CD14-positive monocyte (primary cell): ENCODE measurements at regions of chr16 and their contacts with region 1.

Region 1: DNA sequence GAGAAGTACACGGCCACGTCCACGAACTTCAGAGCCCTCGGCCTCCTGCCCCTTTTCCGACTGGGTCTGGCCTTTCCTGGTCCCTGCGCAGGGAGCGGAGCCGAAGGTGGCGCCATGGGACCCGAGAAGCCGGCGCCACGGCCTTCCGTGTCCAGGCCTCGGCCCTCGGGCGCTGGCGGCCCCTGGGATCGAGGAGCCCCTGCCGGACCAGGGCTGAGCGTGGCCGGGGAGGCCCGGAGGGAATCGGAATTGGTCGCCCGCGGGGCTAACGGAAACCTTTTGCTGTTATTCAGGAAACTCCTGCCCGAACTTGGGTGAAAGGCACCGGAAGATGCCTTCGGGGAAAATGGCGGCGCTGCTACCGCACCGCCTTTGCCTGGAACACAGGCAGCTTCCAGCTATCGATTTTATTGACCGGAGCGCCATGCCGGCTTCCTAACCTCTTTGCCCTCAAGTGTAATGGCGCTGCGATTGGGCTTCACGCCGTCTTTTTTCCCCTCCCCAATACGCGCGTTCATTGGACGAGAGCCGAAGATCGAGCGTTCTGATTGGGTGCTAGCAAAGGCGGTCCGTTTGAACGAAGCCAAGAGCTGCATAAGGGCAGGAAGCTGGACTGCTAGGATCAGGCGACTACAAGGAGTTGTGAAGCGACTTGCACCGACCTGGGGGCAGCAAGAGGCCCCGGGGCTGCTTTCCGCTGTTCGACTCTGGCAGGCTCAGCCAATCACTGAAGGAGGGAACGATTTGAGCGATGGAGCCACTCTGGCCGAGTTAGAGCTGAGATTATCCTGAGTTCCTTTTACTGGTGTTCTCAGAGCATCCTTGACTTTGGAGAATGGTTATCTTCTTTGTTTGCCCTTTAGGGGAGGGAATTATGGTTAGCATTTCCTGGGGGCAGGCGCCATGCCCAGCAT is at the start of gene ZNF689:
- DNase-seq: peak; percentile 94 to 95 (median 94)
- H3K4me3 ChIP-seq: peak within 1 kb of the TSS; percentile 73 to 86 (median 80)
- H3K4me3 Mint-ChIP-seq: peak within 1 kb of the TSS; percentile 89 to 93
- H3K27ac ChIP-seq: peak within 1 kb of the TSS; percentile 67 to 89
- H3K27ac Mint-ChIP-seq: peak within 1 kb of the TSS; percentile 62 to 94 (median 91)
- H3K4me1 ChIP-seq: peaks cover 43 to 53% of the 10 kb centered on the region in 2 donors
- H3K4me1 Mint-ChIP-seq: peaks cover 49% of the 10 kb centered on the region
- H3K27me3 ChIP-seq: no peaks in the 10 kb centered on the region
- H3K27me3 Mint-ChIP-seq: no peaks in the 10 kb centered on the region
- CTCF ChIP-seq: no peak
- polyA plus RNA-seq, gene ZNF689: 4.1 to 11.2 (median 8.0) TPM

Region 2: GRCh38 chr16:30445408-30446202 is 164.6 kb before region 1 on chr16 and contains the start of gene SEPHS2:
- intact Hi-C with region 1: loop called in 1 of 2 experiments (anchors 10 kb)
- DNase-seq: peak; percentile 95 to 99 (median 97)
- H3K4me3 ChIP-seq: peak within 1 kb of the TSS; percentile 81 to 90 (median 85)
- H3K4me3 Mint-ChIP-seq: peak within 1 kb of the TSS; percentile 89 to 95
- H3K27ac ChIP-seq: peak within 1 kb of the TSS; percentile 83 to 90
- H3K27ac Mint-ChIP-seq: peak within 1 kb of the TSS; percentile 89 to 99 (median 97)
- H3K4me1 ChIP-seq: peaks cover 34 to 36% of the 10 kb centered on the region in 2 donors
- H3K4me1 Mint-ChIP-seq: peaks cover 36% of the 10 kb centered on the region
- H3K27me3 ChIP-seq: no peaks in the 10 kb centered on the region
- H3K27me3 Mint-ChIP-seq: peaks cover 0 to 1% (median 0%) of the 10 kb centered on the region in 3 donors
- CTCF ChIP-seq: peak; percentile 51
- polyA plus RNA-seq, gene SEPHS2: 12.8 to 56.4 (median 54.2) TPM

Region 3: DNA sequence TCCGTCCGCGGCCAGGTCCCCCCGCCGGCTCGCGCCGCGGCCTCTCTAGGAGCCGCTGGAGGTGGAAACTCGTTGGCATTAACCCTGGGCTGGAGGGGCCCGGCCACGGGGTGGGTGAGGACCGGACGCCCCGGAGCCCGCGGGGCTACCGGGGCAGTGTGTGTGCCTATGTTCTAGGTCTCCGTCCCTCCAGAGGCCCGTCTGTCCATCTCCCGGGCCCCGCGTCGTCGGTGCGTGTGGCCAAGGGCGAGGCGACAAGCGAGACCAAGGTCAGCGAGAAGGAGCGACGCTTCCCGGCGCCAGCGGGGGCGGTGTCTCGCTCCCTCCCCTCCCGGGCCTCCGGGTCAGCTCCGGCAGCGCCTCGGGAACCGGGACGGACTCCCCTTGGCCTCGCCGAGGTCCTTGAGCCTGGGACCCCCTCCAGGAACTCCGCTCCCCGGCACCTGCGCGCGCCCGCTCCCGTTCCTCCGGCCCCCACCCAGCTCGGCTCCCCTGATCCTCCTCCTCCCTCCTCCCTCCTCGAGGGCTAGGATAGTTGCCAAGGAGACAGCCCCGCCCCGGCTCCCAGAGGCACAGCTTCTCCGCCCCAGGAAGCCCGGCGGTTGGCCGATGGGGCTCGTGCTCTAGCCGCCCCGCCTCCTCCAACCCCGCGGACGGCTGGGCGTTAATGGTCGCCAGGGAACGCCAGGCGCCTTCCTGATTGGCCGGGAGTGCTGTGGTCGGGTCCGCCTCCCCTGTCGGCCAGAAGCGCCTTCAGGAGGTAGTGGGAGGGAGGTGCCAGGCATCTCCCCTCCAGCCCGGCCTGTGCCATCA is 83.2 kb before region 1 on chr16:
- intact Hi-C with region 1: loop called (anchors 5 kb)
- DNase-seq: peak; percentile 93 to 96 (median 95)
- H3K4me3 ChIP-seq: peak overlapping the region; percentile 59 to 93 (median 63)
- H3K4me3 Mint-ChIP-seq: peak overlapping the region; percentile 84 to 92
- H3K27ac ChIP-seq: peak overlapping the region; percentile 85 to 87
- H3K27ac Mint-ChIP-seq: peak overlapping the region; percentile 92 to 97 (median 97)
- H3K4me1 ChIP-seq: peaks cover 28 to 39% of the 10 kb centered on the region in 2 donors
- H3K4me1 Mint-ChIP-seq: peaks cover 29% of the 10 kb centered on the region
- H3K27me3 ChIP-seq: no peaks in the 10 kb centered on the region
- H3K27me3 Mint-ChIP-seq: peaks cover 0 to 4% (median 3%) of the 10 kb centered on the region in 3 donors
- CTCF ChIP-seq: peak; percentile 49

Region 4: DNA sequence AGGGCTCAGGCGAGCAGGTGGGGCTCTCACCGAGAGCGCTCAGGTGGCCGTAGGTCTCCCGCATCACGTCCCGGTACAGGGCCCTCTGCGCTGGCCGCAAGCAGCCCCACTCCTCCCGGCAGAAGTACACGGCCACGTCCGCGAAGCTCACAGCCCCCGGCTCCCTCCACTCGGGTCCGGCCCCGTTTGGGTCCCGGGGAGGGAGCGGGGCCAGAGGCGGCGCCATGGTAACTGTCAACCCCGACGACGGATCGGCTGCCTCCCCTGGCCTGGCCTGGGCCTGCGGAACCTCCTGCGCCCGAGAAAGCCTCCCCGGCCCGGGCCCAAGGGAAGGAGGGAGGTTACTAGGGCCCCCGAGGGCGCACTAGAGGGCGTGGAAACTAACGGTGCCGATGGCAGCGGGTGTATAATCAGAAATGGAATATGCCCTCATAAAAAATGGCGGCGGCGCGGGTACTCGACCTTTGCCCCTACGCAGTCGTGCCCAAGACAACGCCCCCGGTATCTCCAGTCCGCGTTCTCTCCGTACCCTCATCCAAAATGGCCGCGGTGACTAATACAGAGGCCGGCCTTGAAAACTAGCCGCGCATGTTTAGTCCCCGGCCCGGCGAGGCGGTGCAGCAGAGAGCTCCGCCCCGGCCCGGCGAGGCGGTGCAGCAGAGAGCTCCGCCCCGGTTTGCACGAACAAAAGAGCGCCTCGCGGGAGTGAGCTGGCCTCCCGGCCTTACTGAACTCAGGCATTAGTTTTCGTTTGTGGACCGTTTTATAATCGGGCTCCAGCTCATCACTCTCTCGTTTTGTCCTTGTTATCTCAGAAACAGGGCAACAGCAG is 52.0 kb before region 1 on chr16 and contains the start of gene ZNF764:
- intact Hi-C with region 1: loop called in 1 of 2 experiments (anchors 10 kb)
- DNase-seq: peak; percentile 96 to 97 (median 96)
- H3K4me3 ChIP-seq: peak within 1 kb of the TSS; percentile 61 to 93 (median 80)
- H3K4me3 Mint-ChIP-seq: peak within 1 kb of the TSS; percentile 83 to 88
- H3K27ac ChIP-seq: peak within 1 kb of the TSS; percentile 76 to 80
- H3K27ac Mint-ChIP-seq: peak within 1 kb of the TSS; percentile 92 to 98 (median 95)
- H3K4me1 ChIP-seq: peaks cover 49 to 61% of the 10 kb centered on the region in 2 donors
- H3K4me1 Mint-ChIP-seq: peaks cover 56% of the 10 kb centered on the region
- H3K27me3 ChIP-seq: no peaks in the 10 kb centered on the region
- H3K27me3 Mint-ChIP-seq: peaks cover 0 to 5% (median 0%) of the 10 kb centered on the region in 3 donors
- CTCF ChIP-seq: no peak
- polyA plus RNA-seq, gene ZNF764: 0.94 to 4.6 (median 1.0) TPM

Region 5: GRCh38 chr16:30585400-30586189 is 24.6 kb before region 1 on chr16 and contains the start of gene ZNF785:
- intact Hi-C with region 1: loop called in 1 of 2 experiments (anchors 2 kb)
- DNase-seq: peak; percentile 93 to 96 (median 95)
- H3K4me3 ChIP-seq: peak within 1 kb of the TSS; percentile 58 to 86 (median 59)
- H3K4me3 Mint-ChIP-seq: peak within 1 kb of the TSS; percentile 87 to 92
- H3K27ac ChIP-seq: peak within 1 kb of the TSS; percentile 39 to 79
- H3K27ac Mint-ChIP-seq: peak within 1 kb of the TSS; percentile 68 to 86 (median 82)
- H3K4me1 ChIP-seq: peaks cover 14 to 18% of the 10 kb centered on the region in 2 donors
- H3K4me1 Mint-ChIP-seq: peaks cover 22% of the 10 kb centered on the region
- H3K27me3 ChIP-seq: no peaks in the 10 kb centered on the region
- H3K27me3 Mint-ChIP-seq: no peaks in the 10 kb centered on the region
- CTCF ChIP-seq: no peak
- polyA plus RNA-seq, gene ZNF785: 0.67 to 9.0 (median 1.1) TPM